GM12878 (cell line): ENCODE measurements at regions of chr5 and their contacts with region 1.

Region 1: DNA sequence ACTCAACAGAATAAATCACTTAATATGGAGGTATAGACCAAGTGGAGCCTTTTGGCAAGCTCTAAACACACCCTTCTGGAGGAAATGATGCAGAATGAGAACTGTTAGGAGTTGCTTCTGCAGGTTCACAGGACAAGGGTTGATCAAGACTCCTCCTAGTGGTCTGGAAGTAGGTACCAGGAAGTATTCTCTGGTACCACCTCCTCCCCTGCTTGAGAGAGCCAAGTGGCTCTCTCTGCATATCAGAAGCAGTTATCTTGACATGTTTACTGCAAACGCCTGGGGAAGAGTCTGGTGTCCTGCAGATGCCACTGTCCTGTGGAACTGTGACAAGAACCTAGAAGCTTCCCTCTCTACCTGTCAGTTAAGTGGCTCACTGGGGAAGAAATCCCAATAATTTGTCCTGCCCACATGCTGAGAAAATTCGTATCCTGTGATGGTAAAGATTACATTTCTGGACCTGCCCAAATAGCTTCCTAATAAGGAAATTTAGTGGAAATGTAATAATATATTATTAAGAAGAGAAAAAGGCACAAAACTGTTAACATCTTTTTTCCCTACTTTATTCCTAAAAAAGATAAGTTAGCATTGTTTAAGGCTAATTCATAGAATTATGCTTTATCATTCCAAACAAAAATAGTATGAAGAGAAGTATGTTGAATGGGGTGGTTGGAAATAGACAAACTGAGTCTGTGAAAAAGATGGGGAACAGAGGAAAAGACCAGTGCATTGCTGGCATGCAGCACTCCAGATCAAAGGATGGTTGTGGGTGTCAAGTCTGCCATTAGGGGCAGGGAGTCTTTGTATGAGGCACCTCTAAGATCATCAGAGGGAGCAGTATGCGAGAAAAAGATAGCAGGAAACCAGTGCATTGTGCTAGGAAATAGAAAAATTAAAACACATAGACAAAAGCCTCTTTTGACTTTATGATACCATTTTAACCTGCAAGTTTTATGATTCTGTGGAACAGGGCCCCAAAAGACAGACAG is 118.8 kb downstream of the CDC42SE2 start:
- DNase-seq: peak; percentile 71
- ATAC-seq: peak; percentile 74
- H3K4me3 ChIP-seq: no peak overlapping the region
- H3K27ac ChIP-seq: peak overlapping the region; percentile 95
- H3K4me1 ChIP-seq: peaks cover 57% of the 10 kb centered on the region
- H3K27me3 ChIP-seq: no peaks in the 10 kb centered on the region
- CTCF ChIP-seq: peak; percentile 67 to 83 (median 69)
- EP300 ChIP-seq: 0 out of 4 replicates have a peak, but pooled peaks of 1 of the 2 experiments have one; percentile 2
- POLR2A ChIP-seq: no peak
- RAD21 ChIP-seq: peak; percentile 79

Region 2: DNA sequence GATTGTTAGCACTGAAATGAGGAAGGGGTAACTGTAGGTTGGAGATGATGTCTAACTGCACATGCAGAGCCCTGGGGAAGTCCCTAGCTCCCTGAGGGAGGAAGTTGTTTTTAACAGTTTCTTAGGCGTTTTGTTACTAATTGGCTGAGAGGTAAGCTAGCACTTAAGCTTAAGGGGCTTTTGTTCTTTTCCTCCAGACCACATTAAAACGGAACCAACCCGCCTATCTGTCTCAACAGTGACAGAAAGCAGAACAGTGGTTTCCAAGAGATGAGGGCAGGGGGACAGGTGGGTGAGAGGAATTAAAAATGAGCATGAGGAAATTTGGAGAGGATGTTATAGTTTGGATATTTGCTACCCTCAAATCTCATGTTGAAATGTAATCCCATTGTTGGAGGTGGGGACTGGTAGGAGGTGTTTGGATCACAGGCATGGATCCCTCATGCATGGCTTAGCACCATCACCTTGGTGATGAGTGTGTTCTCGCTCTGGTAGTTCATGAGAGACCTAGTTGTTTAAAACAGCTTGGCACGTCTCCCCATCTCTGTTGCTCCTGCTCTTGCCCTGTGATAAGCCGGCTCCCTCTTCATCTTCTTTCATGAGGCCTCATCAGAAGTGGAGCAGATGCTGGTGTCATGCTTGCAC is 173.1 kb before region 1 on chr5:
- CTCF ChIA-PET with region 1: interaction called, 19 read pairs
- POLR2A ChIA-PET with region 1: interaction called, 17 read pairs
- RAD21 ChIA-PET with region 1: interaction called, 66 read pairs
- SMC1A ChIA-PET with region 1: interaction called, 55 read pairs
- in situ Hi-C with region 1: loop called (anchors 5 kb)
- intact Hi-C with region 1: no loop called
- DNase-seq: peak; percentile 94
- ATAC-seq: peak; percentile 77
- H3K4me3 ChIP-seq: peak overlapping the region; percentile 84
- H3K27ac ChIP-seq: peak overlapping the region; percentile 94
- H3K4me1 ChIP-seq: peaks cover 14% of the 10 kb centered on the region; the same call in 1 of the 2 replicates
- H3K27me3 ChIP-seq: no peaks in the 10 kb centered on the region
- CTCF ChIP-seq: no peak
- EP300 ChIP-seq: peak; percentile 82 to 88; a peak in 3 of 4 replicates
- POLR2A ChIP-seq: peak; percentile 71
- RAD21 ChIP-seq: peak; percentile 5; the same call in 1 of the 2 replicates

Region 3: DNA sequence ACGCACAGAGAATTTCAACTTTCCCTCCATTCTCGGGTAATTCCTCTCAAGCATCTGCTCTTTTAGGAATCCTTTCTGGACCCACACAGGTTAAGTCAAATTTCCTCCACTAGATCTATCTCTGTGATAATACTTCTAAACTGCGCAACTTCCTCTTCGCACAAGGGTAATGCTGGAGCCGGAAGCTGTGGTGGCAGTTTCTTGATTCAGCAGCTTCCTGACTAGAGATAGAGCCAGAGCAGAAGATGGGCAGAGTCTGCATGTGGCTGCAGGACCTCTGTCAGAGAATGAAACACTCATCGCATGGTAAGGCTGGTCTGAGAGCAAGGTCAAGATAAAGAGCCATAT is 129.9 kb before region 1 on chr5:
- CTCF ChIA-PET with region 1: interaction called, 12 read pairs
- POLR2A ChIA-PET with region 1: interaction called, 6 read pairs
- RAD21 ChIA-PET with region 1: interaction called, 8 read pairs
- SMC1A ChIA-PET with region 1: interaction called, 12 read pairs
- in situ Hi-C with region 1: no loop called
- intact Hi-C with region 1: no loop called
- DNase-seq: peak; percentile 81
- ATAC-seq: peak; percentile 79
- H3K4me3 ChIP-seq: peak overlapping the region; percentile 38; the same call in 1 of the 2 replicates
- H3K27ac ChIP-seq: peak overlapping the region; percentile 80
- H3K4me1 ChIP-seq: peaks cover 46% of the 10 kb centered on the region
- H3K27me3 ChIP-seq: no peaks in the 10 kb centered on the region
- CTCF ChIP-seq: no peak
- EP300 ChIP-seq: 0 out of 4 replicates have a peak, but pooled peaks of 1 of the 2 experiments have one; percentile 30
- POLR2A ChIP-seq: peak; percentile 72
- RAD21 ChIP-seq: 0 out of 2 replicates have a peak, but pooled peaks have one; percentile 14

Region 4: DNA sequence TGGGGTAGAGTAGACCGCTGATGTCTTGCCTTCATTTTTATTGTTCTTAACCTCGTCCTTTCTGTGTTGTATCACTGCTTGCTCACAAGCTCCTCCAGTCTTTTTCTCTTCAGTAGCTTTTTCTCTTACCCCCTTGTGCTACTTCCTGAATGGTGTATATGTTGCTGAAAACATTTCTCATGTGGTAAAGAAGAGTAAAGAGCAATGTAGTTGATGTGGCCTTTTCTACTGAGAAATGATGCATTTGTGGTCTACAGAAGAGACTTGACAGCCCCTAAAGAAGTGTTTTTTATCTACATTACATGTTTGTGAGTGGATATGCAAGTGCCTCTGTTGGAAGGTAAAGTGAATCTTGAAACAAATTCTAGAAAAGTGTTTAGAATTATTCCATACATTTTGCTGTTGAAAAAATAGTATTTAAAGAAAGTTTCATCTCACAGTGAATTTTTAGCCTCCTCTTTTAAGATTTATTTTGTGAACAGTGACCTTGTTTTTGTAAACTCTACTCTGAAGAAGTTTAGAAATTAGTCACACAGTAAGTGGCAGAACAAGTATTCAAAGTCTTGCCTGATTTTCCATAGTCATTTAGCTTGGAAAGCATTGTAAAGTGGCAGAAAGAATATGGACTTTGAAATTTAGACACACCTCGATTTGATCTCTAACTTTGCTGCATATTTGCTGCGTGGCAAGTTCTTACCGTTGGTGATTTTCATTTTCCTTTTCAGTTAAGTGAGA is 101.4 kb before region 1 on chr5:
- CTCF ChIA-PET with region 1: interaction called, 10 read pairs
- POLR2A ChIA-PET with region 1: interaction called, 5 read pairs
- RAD21 ChIA-PET with region 1: interaction called, 40 read pairs
- SMC1A ChIA-PET with region 1: interaction called, 20 read pairs
- in situ Hi-C with region 1: no loop called
- intact Hi-C with region 1: no loop called
- DNase-seq: no peak
- ATAC-seq: peak; percentile 61
- H3K4me3 ChIP-seq: peak overlapping the region; percentile 44
- H3K27ac ChIP-seq: peak overlapping the region; percentile 89
- H3K4me1 ChIP-seq: peaks cover 55% of the 10 kb centered on the region
- H3K27me3 ChIP-seq: no peaks in the 10 kb centered on the region
- CTCF ChIP-seq: no peak
- EP300 ChIP-seq: peak in 1 of 2 experiments; percentile 13; a peak in 1 of 4 replicates
- POLR2A ChIP-seq: no peak
- RAD21 ChIP-seq: peak; percentile 17; the same call in 1 of the 2 replicates

Region 5: GRCh38 chr5:131394128-131394527 is 11.4 kb after region 1 on chr5:
- CTCF ChIA-PET with region 1: interaction called, 9 read pairs
- POLR2A ChIA-PET with region 1: interaction called, 9 read pairs
- RAD21 ChIA-PET with region 1: interaction called, 29 read pairs
- SMC1A ChIA-PET with region 1: interaction called, 42 read pairs
- in situ Hi-C with region 1: no loop called
- intact Hi-C with region 1: no loop called
- DNase-seq: peak; percentile 66
- ATAC-seq: peak; percentile 84
- H3K4me3 ChIP-seq: no peak overlapping the region
- H3K27ac ChIP-seq: peak overlapping the region; percentile 55
- H3K4me1 ChIP-seq: peaks cover 29% of the 10 kb centered on the region
- H3K27me3 ChIP-seq: no peaks in the 10 kb centered on the region
- CTCF ChIP-seq: no peak
- EP300 ChIP-seq: no peak
- POLR2A ChIP-seq: no peak
- RAD21 ChIP-seq: no peak

Region 6: GRCh38 chr5:131654309-131654708 is 271.6 kb after region 1 on chr5:
- CTCF ChIA-PET with region 1: no interaction called
- POLR2A ChIA-PET with region 1: no interaction called
- RAD21 ChIA-PET with region 1: no interaction called
- SMC1A ChIA-PET with region 1: no interaction called
- in situ Hi-C with region 1: no loop called
- intact Hi-C with region 1: no loop called
- DNase-seq: no peak
- ATAC-seq: no peak
- H3K4me3 ChIP-seq: no peak overlapping the region
- H3K27ac ChIP-seq: no peak overlapping the region
- H3K4me1 ChIP-seq: no peaks in the 10 kb centered on the region
- H3K27me3 ChIP-seq: no peaks in the 10 kb centered on the region
- CTCF ChIP-seq: no peak
- EP300 ChIP-seq: no peak
- POLR2A ChIP-seq: no peak
- RAD21 ChIP-seq: no peak

Region 7: DNA sequence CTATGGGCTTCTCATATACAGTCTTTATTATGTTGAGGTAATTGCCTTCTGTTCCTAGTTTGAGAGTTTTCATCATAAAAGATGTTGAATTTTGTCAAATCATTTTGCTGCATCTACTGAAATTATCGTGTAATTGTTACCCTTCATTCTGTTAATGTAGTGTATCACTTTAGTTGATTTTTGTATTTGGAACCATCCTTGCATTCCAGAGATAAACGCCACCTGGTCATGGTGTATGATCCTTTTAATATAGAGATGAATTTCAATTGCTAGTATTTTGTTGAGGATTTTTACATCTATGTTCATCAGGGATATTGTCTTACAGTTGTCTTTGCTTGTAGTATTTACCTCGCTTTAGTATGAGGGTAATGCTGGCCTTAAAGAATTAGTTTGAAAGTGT is 543.5 kb after region 1 on chr5:
- CTCF ChIA-PET with region 1: no interaction called
- POLR2A ChIA-PET with region 1: no interaction called
- RAD21 ChIA-PET with region 1: no interaction called
- SMC1A ChIA-PET with region 1: no interaction called
- in situ Hi-C with region 1: no loop called
- intact Hi-C with region 1: no loop called
- DNase-seq: no peak
- ATAC-seq: no peak
- H3K4me3 ChIP-seq: no peak overlapping the region
- H3K27ac ChIP-seq: no peak overlapping the region
- H3K4me1 ChIP-seq: no peaks in the 10 kb centered on the region
- H3K27me3 ChIP-seq: no peaks in the 10 kb centered on the region
- CTCF ChIP-seq: no peak
- EP300 ChIP-seq: no peak
- POLR2A ChIP-seq: no peak
- RAD21 ChIP-seq: no peak